ENCODE measurements at regions of chr12 and their contacts with region 1.

Region 1: DNA sequence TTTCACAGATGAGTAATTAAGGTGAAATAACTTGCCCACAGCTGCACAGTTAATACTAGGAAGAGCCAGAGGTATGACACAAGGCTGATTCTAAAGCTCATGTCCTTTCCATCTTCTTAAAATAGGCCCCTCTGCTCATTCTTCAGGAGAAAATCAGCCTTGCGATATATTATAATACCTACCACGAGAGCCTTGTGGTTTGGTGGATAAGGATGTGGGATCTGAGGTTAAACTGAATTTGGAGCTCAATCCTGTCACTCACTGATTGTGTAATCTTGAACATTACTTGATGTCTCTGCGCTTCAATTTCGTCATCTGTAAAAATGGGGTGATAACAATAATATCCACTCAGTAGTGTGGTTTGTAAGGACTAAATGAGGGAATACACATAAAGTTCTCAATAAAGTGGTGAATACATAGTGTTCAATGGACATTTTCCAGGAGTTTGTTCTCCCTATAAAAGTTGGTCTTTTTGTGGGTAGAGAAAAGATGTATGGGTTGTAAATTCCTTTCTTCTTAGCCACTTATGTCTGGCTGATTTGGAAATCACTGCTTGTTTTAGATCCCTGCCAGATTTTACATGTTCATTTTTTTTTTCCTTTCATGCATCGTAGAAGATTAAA is 25.1 kb upstream of the ATP2B1 start:
- DNase-seq: peak; percentile 29
- H3K4me3 ChIP-seq: no peak overlapping the region
- H3K27ac ChIP-seq: no peak overlapping the region
- H3K4me1 ChIP-seq: no peaks in the 10 kb centered on the region
- H3K27me3 ChIP-seq: no peaks in the 10 kb centered on the region
- CTCF ChIP-seq: no peak

Region 2: GRCh38 chr12:89927226-89927698 is 193.6 kb after region 1 on chr12:
- CTCF ChIA-PET with region 1: no interaction called
- POLR2A ChIA-PET with region 1: no interaction called
- intact Hi-C with region 1: no loop called
- DNase-seq: no peak
- H3K4me3 ChIP-seq: no peak overlapping the region
- H3K27ac ChIP-seq: no peak overlapping the region
- H3K4me1 ChIP-seq: no peaks in the 10 kb centered on the region
- H3K27me3 ChIP-seq: no peaks in the 10 kb centered on the region
- CTCF ChIP-seq: no peak

Region 3: DNA sequence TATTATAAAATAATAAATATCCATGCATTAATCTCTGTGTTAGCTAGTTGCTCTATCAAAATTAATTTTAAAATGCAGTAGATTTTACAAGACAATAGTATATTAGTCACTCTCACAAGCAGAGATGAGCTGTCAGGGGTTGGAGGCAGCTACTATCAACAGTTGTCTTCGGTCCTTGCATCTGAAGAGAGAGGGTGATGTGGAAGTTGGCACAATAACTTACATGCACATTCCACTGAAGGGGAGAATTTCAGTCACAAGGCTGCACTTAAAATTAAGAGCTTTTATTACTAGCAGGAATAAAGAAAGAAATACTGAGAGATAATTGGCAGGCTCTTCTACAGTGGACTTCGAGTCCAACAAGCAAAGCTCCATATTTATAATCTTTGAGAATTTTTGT is 1615.8 kb after region 1 on chr12:
- CTCF ChIA-PET with region 1: no interaction called
- POLR2A ChIA-PET with region 1: no interaction called
- intact Hi-C with region 1: loop called (anchors 10 kb)
- DNase-seq: no peak
- H3K4me3 ChIP-seq: no peak overlapping the region
- H3K27ac ChIP-seq: no peak overlapping the region
- H3K4me1 ChIP-seq: no peaks in the 10 kb centered on the region
- H3K27me3 ChIP-seq: peaks cover 6% of the 10 kb centered on the region
- CTCF ChIP-seq: no peak

Measured in A673 (cell line).